Dorsolateral prefrontal cortex (tissue), 120 donors: ENCODE measurements at regions of chr2 and their contacts with region 1.

Region 1: DNA sequence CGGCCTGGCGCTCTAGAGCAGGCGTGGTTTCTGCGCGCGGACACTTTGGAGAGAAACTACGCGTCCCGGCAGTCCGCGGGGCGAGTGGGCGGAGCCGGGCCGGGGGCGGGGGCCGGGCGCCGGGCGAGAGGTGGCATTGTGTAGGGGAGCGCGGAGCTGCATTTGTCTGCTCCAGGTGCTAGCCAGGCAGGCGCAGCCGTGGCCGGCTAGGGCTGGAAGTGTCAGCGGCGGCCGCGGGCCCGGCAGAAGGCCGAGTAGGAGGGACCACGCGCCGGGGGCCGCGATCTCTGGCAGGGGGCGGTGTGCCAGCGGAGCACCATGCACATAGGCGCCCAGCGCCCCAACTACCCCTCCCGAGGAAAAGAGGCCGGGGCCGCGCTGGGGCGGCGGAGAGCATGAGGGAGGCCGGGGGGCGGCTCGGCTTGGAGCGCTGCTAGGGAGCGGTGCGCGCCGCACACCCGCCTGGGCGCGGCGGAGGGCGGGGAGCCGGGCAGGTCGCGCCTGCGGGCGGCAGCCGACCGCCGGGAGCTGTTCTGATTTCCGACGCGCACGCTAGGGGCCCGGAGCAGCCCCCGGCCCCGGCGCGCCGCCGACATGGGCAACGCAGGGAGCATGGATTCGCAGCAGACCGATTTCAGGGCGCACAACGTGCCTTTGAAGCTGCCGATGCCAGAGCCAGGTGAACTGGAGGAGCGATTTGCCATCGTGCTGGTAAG is at the start of gene FMNL2:
- DNase-seq: peak; percentile 81 to 92 (median 90)
- H3K4me3 ChIP-seq: peak within 1 kb of the TSS; percentile 64 to 100 (median 92)
- H3K27ac ChIP-seq: peak within 1 kb of the TSS; percentile 53 to 98 (median 95)
- H3K27me3 ChIP-seq: no peaks in the 10 kb centered on the region
- CTCF ChIP-seq: peak in 52 of 56 donors; percentile 12 to 74 (median 39)
- total RNA-seq, gene FMNL2: 118 to 440 (median 197) TPM

Region 2: DNA sequence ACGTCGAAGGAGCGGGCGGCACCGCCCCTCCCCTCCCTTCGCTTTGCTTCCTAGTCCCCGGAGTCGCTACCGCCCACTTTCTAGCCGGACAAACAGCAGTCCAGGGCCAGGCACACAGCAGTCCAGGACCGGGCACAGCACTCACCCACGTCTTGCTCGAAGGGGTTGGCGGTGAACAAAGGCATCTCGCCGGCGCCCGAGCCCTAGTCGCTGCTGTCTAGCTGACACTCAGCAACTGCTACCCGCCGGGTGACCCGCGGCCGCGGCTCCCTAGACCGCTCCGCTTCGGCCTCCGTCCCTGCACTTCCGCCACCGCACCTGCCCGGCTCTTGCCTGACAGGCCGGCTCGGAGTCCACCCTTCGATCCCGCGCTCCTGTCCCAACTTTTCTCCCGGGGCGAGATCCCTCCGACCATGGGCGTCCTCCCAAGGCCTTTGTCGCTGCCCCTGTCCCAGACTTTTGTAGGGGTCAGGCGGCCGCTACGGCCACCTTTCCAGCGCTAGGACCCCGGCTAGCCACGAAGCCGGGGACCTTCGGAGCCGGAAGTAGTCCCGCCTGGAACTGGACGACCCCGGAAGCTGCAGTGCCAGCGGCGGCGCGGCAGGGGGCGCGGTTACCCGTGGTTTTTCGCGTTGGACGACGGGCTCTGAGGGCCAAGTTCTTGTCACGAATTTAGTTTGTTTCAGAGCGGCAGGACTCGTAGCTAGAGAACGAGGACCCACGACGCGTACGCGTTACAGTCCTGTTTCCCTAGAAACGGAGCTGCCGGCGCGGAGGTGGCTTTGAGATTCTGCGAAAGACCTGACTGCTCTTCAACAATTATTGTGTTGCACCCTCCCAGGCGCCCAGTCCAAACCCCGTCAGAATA is 159.5 kb before region 1 on chr2 and contains the start of gene STAM2:
- intact Hi-C with region 1: loop called in 1 of 2 experiments (anchors 5 kb)
- DNase-seq: peak; percentile 83 to 93 (median 88)
- H3K4me3 ChIP-seq: peak within 1 kb of the TSS; percentile 69 to 98 (median 85)
- H3K27ac ChIP-seq: peak within 1 kb of the TSS; percentile 88 to 100 (median 97)
- H3K27me3 ChIP-seq: no peaks in the 10 kb centered on the region
- CTCF ChIP-seq: peak; percentile 89 to 99 (median 97)
- total RNA-seq, gene STAM2: 25.9 to 44.5 (median 34.8) TPM

Region 3: DNA sequence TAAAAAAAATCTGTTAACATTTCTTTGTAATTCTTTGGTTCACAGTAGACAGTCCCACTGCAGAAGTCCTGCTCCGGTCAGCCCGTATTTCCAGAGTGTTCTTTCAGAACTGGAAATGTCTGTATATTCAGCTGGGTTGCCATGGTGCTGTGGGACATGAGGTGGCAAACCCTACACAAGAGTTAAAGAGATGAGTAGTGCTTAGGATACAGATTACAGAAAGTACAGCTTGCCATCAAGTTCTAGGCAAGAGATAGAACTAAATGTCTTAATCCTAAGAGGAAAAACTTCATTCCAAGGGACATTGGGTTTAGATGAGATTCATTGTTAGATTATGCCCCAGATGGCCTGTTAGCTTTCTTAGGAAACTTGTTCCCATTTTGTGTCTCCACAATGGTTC is 59.9 kb after region 1 on chr2:
- intact Hi-C with region 1: loop called in 1 of 2 experiments (anchors 5 kb)
- DNase-seq: no peak
- H3K4me3 ChIP-seq: peak overlapping the region in 15 of 59 donors; percentile 15 to 54 (median 47)
- H3K27ac ChIP-seq: peak overlapping the region; percentile 10 to 98 (median 80)
- H3K27me3 ChIP-seq: no peaks in the 10 kb centered on the region
- CTCF ChIP-seq: no peak

Region 4: DNA sequence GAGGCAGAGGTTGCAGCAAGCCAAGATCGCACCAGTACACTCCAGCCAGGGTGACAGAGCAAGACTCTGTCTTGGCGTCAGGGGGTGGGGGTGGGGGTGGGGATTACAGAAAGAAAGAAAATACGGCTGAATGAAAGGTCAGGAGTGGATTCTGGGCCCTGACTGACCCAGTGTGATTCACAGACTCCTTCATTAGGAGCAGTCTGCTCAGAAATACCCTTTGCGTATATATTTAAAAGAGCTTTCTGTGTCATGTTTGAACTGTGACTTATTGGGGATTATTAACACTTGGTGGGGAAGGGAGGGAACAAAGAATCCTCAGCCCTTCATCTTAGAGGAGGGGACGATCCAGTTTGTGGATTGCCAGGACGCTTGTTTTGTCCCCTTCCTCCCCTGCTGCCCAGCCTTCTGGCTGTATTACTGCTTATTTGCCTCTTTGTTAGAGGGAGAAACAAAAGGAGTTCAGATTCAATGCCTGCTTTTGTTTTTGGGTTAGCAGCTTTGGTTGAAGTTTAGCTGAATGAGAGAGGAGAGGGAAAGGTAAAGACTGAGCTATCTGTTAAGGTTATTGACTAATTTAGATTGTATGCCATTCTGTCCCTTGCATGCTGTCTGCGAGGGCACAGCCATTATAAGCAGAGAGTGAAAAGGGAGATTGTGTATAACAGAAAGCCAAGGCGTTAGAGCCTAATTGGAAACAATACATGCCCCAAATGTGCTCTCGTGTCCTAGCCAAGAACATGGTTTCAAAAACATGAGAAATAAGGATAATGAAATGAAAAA is 118.2 kb after region 1 on chr2:
- intact Hi-C with region 1: loop called (anchors 5 kb)
- DNase-seq: peak in 2 of 10 donors; percentile 46 to 66
- H3K4me3 ChIP-seq: peak overlapping the region in 44 of 59 donors; percentile 1 to 66 (median 41)
- H3K27ac ChIP-seq: peak overlapping the region; percentile 84 to 100 (median 97)
- H3K27me3 ChIP-seq: no peaks in the 10 kb centered on the region
- CTCF ChIP-seq: peak in 6 of 56 donors; percentile 4 to 35 (median 18)

Region 5: GRCh38 chr2:152558158-152558984 is 223.2 kb after region 1 on chr2:
- intact Hi-C with region 1: loop called (anchors 10 kb)
- DNase-seq: no peak
- H3K4me3 ChIP-seq: peak overlapping the region in 9 of 59 donors; percentile 3 to 21 (median 12)
- H3K27ac ChIP-seq: peak overlapping the region in 58 of 59 donors; percentile 17 to 96 (median 81)
- H3K27me3 ChIP-seq: no peaks in the 10 kb centered on the region
- CTCF ChIP-seq: peak in 1 of 56 donors; percentile 28

Region 6: DNA sequence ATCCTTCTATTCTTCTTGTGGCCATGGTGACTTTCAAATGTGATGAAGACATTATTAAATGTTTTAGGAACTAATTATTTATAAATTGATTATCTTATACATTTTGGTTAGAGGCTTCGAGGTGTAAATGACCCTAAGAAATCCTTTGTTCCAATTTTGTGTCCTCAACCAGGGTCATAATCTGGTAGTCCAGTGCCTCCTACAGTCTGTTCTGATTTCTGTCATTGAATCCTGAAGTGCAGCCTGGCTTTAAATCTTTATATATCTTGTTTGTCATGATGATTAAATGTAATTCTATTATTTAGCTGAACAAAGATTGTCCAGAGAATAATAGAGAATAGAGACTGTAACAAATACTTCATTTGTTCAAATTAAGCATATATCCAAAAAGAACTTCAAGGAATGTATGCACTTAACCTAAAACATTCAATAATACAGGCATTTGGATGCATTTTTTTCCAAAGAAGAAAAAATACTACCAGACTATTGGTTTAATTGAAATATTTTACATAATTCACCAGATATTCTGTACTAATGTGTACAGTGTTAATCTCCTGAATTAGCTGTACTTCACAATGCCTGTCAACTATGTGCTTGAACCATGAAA is 292.3 kb after region 1 on chr2:
- intact Hi-C with region 1: loop called (anchors 2 to 5 kb)
- DNase-seq: no peak
- H3K4me3 ChIP-seq: no peak overlapping the region
- H3K27ac ChIP-seq: peak overlapping the region in 54 of 59 donors; percentile 10 to 86 (median 66)
- H3K27me3 ChIP-seq: no peaks in the 10 kb centered on the region
- CTCF ChIP-seq: peak; percentile 20 to 91 (median 68)